ENCODE measurements at regions of chr5 and their contacts with region 1.

Region 1: DNA sequence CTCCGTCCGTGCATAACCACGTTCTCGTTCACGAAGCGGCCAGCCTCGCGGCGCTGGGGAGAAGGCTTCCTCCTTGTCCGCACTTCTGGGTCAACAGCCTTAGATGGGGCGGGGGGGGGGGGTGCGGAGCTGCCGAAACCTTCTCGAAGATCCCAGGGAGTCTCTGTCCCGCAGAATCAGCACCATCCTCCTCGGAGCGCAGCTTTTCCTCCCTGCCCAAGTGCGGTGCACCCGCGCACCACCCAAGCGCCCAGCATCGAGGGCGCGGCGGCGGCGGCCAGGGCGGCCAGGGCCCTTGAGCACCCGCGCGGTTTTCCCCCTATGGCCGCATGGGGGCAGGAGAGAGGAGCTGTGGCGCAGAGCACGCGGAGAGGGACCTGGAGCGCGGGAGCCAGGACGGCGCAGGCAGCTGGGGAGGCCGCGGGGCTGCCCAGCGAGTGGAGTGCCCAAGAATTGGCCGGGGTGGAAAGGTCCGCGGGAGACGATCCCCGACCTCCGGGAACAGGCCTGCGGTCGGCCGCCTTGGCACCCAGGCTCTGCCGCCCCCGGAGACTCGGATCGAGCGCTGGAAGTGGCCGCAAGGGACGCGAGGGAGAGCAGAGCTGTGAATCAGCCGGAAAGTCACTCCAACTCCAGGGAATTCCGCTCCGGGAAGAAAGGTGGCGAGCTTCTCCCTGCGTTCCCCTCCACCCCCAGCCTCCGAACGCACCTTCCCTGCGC is 43.1 kb downstream of the TMEM174 start:
- DNase-seq: peak; percentile 92
- H3K4me3 ChIP-seq: peak overlapping the region; percentile 46 to 68 (median 54)
- H3K27ac ChIP-seq: peak overlapping the region; percentile 0 to 70 (median 50)
- H3K4me1 ChIP-seq: peaks cover 12 to 17% (median 15%) of the 10 kb centered on the region in 4 donors
- H3K27me3 ChIP-seq: peaks cover 0 to 40% (median 0%) of the 10 kb centered on the region in 4 donors
- CTCF ChIP-seq: peak; percentile 77 to 92 (median 91)
- EP300 ChIP-seq: no peak
- POLR2A ChIP-seq: no peak

Region 2: DNA sequence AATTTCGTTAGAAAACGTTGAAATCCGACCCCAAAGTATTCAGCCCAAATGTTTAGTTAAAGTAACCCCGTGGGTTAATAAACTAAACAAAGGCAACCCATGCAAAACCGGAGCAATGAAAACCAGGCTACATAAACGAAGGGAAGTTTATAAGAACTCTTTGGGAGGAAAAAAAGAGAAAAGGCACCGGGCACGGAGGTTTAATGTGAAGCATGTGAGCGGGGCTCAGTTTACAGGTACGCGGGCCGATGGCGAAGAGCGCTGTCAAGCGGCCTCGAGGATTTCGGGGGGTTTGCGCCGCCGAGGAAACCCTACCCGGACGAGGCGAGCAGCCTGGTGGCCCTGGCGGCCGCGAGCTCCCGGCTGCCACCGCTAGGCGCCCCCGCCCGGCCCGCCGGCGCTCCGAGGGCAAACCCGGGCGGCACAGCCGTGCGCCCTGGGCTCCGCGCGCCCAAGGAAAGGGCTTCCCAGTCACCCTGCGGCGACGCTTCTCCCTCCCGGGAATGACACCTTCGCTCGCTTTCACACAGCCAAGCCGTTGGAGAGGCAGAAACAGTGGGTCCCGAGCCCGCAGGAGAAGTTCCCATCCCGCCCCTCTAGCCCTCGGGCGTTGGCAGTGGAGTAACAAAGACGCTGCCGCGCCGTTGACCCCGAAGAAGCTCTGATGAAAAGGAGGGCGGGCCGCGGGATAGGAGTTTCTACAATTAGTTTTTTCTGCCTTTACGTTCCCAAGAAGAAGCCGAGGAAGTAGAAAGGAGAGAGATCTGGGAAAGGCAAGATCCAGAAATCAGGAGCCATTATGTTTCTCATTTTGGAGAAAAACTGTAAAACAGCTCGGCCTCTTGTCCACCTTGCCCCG is 83.0 kb after region 1 on chr5:
- intact Hi-C with region 1: loop called (anchors 5 kb)
- DNase-seq: no peak
- H3K4me3 ChIP-seq: peak overlapping the region; percentile 33 to 47 (median 38)
- H3K27ac ChIP-seq: no peak overlapping the region
- H3K4me1 ChIP-seq: peaks cover 24 to 40% (median 34%) of the 10 kb centered on the region in 4 donors
- H3K27me3 ChIP-seq: peaks cover 9 to 86% (median 57%) of the 10 kb centered on the region in 4 donors
- CTCF ChIP-seq: peak; percentile 17 to 36 (median 22)
- EP300 ChIP-seq: no peak
- POLR2A ChIP-seq: no peak

Region 3: DNA sequence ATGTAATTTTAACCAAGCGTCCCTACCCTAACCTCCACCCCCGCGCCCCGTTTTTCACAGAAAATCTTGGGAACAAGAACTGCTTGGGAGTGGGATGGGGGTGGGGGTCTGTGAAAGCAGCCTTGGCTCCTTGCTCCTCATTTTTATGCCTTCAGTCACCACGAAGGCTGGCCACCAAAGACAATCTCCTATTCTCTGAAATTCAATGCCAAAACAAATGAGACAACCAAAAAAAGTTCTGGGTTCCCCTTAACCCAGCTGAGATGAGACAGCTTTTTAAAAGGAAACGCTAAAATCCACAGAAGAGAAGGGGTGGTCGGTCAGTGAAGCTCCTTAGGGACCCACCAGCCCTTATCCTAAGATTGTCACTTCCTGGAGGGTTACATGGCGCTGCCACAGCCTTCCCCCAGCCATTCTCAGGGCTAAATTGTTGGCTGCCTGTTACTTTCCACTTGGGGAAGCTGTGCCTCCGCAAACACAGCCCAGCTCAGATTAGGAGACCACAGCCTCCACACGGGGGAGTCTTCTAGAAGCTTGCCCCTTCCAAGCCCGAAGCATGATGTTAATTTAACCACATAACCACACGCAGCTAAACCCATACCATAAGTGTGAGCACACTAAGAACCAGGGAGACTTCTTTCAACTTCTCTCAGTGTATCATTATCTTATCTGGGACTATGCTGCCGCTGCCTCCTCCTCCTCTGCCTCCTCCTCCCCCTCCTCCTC is 96.3 kb after region 1 on chr5:
- intact Hi-C with region 1: no loop called
- DNase-seq: no peak
- H3K4me3 ChIP-seq: no peak overlapping the region
- H3K27ac ChIP-seq: peak overlapping the region in 1 of 4 donors; percentile 18
- H3K4me1 ChIP-seq: peaks cover 8 to 20% (median 17%) of the 10 kb centered on the region in 4 donors
- H3K27me3 ChIP-seq: peaks cover 0 to 38% (median 0%) of the 10 kb centered on the region in 4 donors
- CTCF ChIP-seq: peak in 2 of 3 experiments; percentile 6 to 21
- EP300 ChIP-seq: no peak
- POLR2A ChIP-seq: no peak

Region 4: DNA sequence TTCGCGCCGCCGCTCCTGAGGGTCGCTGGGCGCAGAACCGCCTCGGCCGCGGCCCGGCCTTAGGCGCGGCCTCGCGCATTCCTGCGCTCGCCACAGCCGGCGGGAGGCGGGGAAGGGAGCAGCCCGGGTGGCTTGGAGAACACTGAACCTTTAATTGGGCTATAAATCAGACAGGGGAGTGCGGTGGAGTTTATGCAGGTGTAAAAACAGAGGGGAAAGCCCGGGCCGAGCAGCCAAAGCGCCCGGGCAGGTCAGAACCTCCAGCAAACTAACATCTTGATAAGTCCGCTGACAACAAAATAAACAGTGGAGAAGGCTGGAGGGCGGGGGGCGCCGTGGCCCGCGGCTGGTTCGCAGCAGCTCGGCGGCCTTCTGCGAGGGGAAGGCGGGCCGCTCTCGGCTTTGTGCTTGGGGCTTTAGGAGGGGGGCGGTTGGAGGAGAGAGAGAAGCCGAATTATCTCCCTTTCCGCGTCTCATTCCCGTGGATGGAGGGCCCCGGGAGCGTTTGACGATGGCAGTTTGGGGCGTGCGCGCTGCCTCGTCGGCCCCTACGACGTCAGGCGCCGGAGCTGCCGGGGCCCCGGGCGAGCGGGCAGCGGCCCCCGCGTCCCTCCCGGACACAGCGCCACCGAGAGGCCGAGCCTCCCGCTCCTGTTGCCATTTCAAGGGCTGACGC is 221.2 kb after region 1 on chr5:
- intact Hi-C with region 1: loop called (anchors 5 kb)
- DNase-seq: no peak
- H3K4me3 ChIP-seq: peak overlapping the region; percentile 51 to 53 (median 52)
- H3K27ac ChIP-seq: peak overlapping the region; percentile 78 to 89 (median 85)
- H3K4me1 ChIP-seq: peaks cover 17 to 25% (median 25%) of the 10 kb centered on the region in 4 donors
- H3K27me3 ChIP-seq: peaks cover 0 to 73% (median 26%) of the 10 kb centered on the region in 4 donors
- CTCF ChIP-seq: peak; percentile 40 to 51 (median 46)
- EP300 ChIP-seq: no peak
- POLR2A ChIP-seq: no peak